Activated CD8-positive, alpha-beta T cell treated with anti-CD3 and anti-CD28 coated beads for 36 hours (primary cell): ENCODE measurements at regions of chr13 and their contacts with region 1.

Region 1: GRCh38 chr13:24323036-24323738 is 13.8 kb downstream of the C1QTNF9 start:
- DNase-seq: no peak
- ATAC-seq: no peak
- H3K4me3 Mint-ChIP-seq: no peak overlapping the region
- H3K27ac Mint-ChIP-seq: no peak overlapping the region
- H3K4me1 Mint-ChIP-seq: no peaks in the 10 kb centered on the region
- H3K27me3 Mint-ChIP-seq: peaks cover 27% of the 10 kb centered on the region
- CTCF ChIP-seq: no peak

Region 2: GRCh38 chr13:23889615-23890607 is 433.3 kb before region 1 on chr13:
- CTCF ChIA-PET with region 1: no interaction called
- POLR2A ChIA-PET with region 1: no interaction called
- intact Hi-C with region 1: loop called (anchors 5 kb)
- DNase-seq: no peak
- ATAC-seq: no peak
- H3K4me3 Mint-ChIP-seq: peak overlapping the region; percentile 83
- H3K27ac Mint-ChIP-seq: peak overlapping the region; percentile 70
- H3K4me1 Mint-ChIP-seq: peaks cover 21% of the 10 kb centered on the region
- H3K27me3 Mint-ChIP-seq: no peaks in the 10 kb centered on the region
- CTCF ChIP-seq: no peak

Region 3: DNA sequence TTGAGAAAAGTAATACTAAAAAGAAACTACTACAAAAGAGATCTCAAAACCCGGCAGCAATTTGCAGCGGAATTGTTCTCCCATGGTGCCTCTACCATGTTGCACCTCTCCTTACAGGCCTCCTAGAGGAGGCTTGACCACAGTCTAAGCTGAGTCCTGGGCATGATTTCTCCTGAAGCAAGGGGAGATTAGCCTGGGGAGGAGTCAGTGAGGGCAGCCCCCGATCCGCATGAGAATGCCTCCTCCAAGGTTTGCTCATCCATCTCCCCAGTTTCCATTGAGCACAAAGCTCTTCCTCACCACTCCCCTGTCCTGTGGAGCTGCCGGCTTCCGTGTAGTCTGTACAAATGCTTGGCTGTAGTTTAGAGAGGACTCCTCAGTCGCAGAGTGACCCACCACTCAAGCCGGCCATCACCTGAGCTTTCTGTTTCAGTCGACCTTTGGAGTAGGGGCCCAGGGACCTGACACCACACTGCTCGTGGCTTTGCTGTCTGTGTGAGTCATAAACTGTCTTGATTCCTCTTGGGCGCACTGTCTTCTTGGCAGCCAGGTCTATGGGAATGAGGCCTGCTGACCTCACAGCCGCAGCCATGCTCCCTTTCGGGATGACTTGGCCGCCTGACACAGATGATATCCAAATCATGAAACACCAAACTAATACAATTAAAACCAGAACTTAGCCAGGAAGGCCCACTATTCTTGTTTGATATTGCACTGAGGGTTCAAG is 58.5 kb after region 1 on chr13:
- CTCF ChIA-PET with region 1: no interaction called
- POLR2A ChIA-PET with region 1: no interaction called
- intact Hi-C with region 1: no loop called
- DNase-seq: peak; percentile 12
- ATAC-seq: peak; percentile 34
- H3K4me3 Mint-ChIP-seq: no peak overlapping the region
- H3K27ac Mint-ChIP-seq: no peak overlapping the region
- H3K4me1 Mint-ChIP-seq: peaks cover 13% of the 10 kb centered on the region
- H3K27me3 Mint-ChIP-seq: no peaks in the 10 kb centered on the region
- CTCF ChIP-seq: no peak

Region 4: DNA sequence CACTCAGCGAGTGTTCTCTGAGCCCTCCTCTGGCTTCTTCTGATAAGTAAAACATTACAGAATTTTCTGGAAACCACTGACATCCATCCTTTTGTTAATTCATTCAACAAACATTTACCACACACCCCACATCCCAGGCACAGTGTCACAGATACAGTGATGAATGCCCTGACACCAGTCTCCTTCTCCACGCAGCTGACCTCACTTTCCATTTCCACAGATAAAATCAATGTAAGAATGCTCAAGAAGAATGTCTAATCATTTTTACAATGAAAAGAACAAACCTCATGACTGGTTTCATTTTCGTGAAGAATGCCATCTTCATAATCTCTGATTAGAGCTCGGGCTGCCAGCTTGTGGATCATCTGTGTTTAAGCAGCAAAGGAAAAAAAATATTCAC is 120.2 kb after region 1 on chr13:
- CTCF ChIA-PET with region 1: no interaction called
- POLR2A ChIA-PET with region 1: no interaction called
- intact Hi-C with region 1: no loop called
- DNase-seq: no peak
- ATAC-seq: no peak
- H3K4me3 Mint-ChIP-seq: no peak overlapping the region
- H3K27ac Mint-ChIP-seq: no peak overlapping the region
- H3K4me1 Mint-ChIP-seq: no peaks in the 10 kb centered on the region
- H3K27me3 Mint-ChIP-seq: no peaks in the 10 kb centered on the region
- CTCF ChIP-seq: no peak